ENCODE measurements at regions of chr11 and their contacts with region 1.

Region 1: DNA sequence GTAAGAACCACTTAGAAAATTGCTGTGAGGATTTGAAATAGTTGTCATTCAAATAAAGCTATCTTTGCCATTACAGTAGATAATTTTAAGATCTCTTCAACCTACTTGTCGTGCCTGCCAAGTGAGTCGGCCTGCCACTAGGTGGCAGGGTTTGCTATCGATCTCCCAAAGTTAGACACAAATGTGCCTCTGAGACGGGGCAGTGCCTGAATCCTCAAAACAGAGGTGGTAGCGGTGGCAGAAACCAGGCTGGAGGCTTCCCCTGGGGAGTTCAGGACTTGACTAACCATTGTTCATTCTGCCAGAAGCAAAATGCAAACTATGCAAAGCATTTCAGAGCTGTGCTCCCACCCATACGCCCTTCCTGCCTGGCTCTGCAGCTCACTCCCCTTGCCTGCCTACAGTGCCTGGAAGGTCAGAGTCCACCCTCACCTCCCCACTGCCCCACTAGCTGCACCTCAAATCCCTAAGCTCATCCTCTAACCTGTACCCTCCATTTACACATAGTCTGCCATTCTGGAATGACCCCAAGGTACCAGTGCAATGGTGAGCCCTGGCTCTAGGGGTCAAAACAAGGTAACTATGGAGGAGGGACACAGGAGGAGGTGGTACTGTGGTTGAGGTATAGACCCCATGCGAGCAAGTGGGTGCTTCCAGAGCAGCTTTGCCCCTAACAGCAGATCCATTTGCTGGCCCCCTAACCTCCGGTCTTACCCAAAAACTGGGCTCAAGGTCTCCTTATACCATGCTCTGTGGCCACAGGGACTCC is 82.1 kb downstream of the C11orf58 start:
- DNase-seq: peak; percentile 78
- ATAC-seq: peak; percentile 76
- H3K4me3 Mint-ChIP-seq: no peak overlapping the region
- H3K27ac Mint-ChIP-seq: no peak overlapping the region
- H3K4me1 Mint-ChIP-seq: peaks cover 4% of the 10 kb centered on the region
- H3K27me3 Mint-ChIP-seq: peaks cover 10% of the 10 kb centered on the region

Region 2: GRCh38 chr11:16685914-16686313 is 134.6 kb before region 1 on chr11:
- CTCF ChIA-PET with region 1: no interaction called
- DNase-seq: no peak
- ATAC-seq: no peak
- H3K4me3 Mint-ChIP-seq: no peak overlapping the region
- H3K27ac Mint-ChIP-seq: no peak overlapping the region
- H3K4me1 Mint-ChIP-seq: no peaks in the 10 kb centered on the region
- H3K27me3 Mint-ChIP-seq: peaks cover 7% of the 10 kb centered on the region

Region 3: GRCh38 chr11:16809886-16810668 is 10.4 kb before region 1 on chr11:
- CTCF ChIA-PET with region 1: interaction called, 12 read pairs
- DNase-seq: no peak
- ATAC-seq: no peak
- H3K4me3 Mint-ChIP-seq: no peak overlapping the region
- H3K27ac Mint-ChIP-seq: no peak overlapping the region
- H3K4me1 Mint-ChIP-seq: peaks cover 4% of the 10 kb centered on the region
- H3K27me3 Mint-ChIP-seq: peaks cover 8% of the 10 kb centered on the region